ENCODE measurements at regions of chr11 and their contacts with region 1.

Region 1: GRCh38 chr11:126310228-126310991 is 6.5 kb downstream of the DCPS start:
- DNase-seq: peak; percentile 78
- H3K4me3 Mint-ChIP-seq: no peak overlapping the region
- H3K27ac Mint-ChIP-seq: no peak overlapping the region
- H3K4me1 Mint-ChIP-seq: peaks cover 5% of the 10 kb centered on the region
- H3K27me3 Mint-ChIP-seq: no peaks in the 10 kb centered on the region
- CTCF ChIP-seq: peak; percentile 82

Region 2: GRCh38 chr11:126021256-126021655 is 289.2 kb before region 1 on chr11:
- CTCF ChIA-PET with region 1: no interaction called
- POLR2A ChIA-PET with region 1: no interaction called
- intact Hi-C with region 1: no loop called
- DNase-seq: no peak
- H3K4me3 Mint-ChIP-seq: no peak overlapping the region
- H3K27ac Mint-ChIP-seq: no peak overlapping the region
- H3K4me1 Mint-ChIP-seq: no peaks in the 10 kb centered on the region
- H3K27me3 Mint-ChIP-seq: no peaks in the 10 kb centered on the region
- CTCF ChIP-seq: no peak

Region 3: DNA sequence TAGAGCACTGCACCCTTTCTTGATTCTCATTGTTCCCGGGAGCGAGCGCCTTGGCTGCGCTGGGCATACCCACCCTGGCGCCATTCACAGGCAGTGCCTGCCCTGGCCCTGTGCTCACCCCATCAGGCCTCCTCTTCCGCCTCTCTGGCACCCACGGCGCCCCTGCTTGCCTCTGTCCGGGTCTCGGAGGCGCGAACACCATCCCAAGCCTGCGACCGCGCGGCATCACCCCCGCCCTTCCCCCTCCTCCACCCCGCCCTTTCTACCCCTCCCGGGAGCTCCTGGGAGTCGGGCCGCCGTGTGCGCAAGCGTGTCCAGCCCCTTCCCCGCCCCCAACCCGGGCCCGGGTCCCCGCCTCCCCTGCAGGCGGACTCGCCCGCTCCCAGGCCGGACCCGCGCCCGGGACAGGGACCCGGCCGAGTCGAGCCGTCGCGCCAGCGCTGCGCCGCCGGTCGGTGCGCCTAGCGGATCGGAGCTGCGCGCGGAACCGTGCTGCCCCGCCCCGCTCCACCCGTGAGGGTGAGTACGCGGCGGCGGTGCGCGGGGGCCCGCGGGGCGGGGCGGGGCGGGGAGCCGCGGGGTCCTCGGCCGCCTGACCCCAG is 45.0 kb after region 1 on chr11 and contains the start of gene ST3GAL4:
- CTCF ChIA-PET with region 1: interaction called, 22 read pairs
- POLR2A ChIA-PET with region 1: no interaction called
- intact Hi-C with region 1: no loop called
- DNase-seq: peak; percentile 74
- H3K4me3 Mint-ChIP-seq: peak within 1 kb of the TSS; percentile 85
- H3K27ac Mint-ChIP-seq: peak within 1 kb of the TSS; percentile 73
- H3K4me1 Mint-ChIP-seq: peaks cover 44% of the 10 kb centered on the region
- H3K27me3 Mint-ChIP-seq: no peaks in the 10 kb centered on the region
- CTCF ChIP-seq: no peak
- total RNA-seq, gene ST3GAL4: 12.3 and 15.3 TPM in 2 replicates

Region 4: GRCh38 chr11:126403658-126404057 is 93.2 kb after region 1 on chr11:
- CTCF ChIA-PET with region 1: interaction called, 12 read pairs
- POLR2A ChIA-PET with region 1: interaction called, 5 read pairs
- intact Hi-C with region 1: no loop called
- DNase-seq: peak; percentile 68
- H3K4me3 Mint-ChIP-seq: peak overlapping the region; percentile 8
- H3K27ac Mint-ChIP-seq: peak overlapping the region; percentile 65
- H3K4me1 Mint-ChIP-seq: peaks cover 33% of the 10 kb centered on the region
- H3K27me3 Mint-ChIP-seq: no peaks in the 10 kb centered on the region
- CTCF ChIP-seq: no peak

Region 5: DNA sequence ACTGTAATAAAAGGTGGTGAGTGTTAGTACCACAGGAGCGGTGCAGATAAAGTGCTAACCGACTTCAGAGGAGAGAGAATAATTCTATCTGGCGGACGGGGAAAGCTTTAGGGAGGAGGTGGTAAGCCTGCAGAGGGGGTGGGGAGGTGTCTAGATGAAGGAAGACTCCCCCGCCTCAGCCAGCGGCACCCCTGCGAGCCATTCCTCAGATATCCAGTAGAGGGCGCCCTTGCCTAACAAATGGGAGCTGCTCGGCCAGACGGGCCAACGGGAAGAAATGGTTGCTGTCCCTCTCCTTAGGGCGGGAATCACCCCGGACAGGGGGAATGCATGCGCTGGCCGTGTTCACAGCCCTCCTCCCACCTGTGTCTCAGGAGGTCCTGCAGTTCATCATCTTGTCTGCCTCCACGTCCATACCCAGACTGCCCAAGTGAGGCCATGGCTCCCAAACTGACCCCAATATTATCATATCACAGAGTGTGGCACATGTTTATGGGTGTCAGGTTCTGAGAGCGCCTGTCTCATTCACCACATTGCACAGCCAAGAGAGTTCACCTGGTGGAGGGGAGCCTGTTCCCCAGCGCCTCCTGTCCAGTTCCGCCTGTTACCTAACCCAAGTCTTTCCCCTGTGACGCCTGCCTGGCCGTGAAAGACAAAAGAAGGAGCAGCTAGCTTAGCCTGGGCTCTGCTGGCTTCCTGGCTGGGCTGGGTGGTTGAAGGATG is 130.5 kb after region 1 on chr11:
- CTCF ChIA-PET with region 1: interaction called, 6 read pairs
- POLR2A ChIA-PET with region 1: no interaction called
- intact Hi-C with region 1: loop called (anchors 1 kb)
- DNase-seq: peak; percentile 80
- H3K4me3 Mint-ChIP-seq: no peak overlapping the region
- H3K27ac Mint-ChIP-seq: no peak overlapping the region
- H3K4me1 Mint-ChIP-seq: peaks cover 5% of the 10 kb centered on the region
- H3K27me3 Mint-ChIP-seq: no peaks in the 10 kb centered on the region
- CTCF ChIP-seq: peak; percentile 95

Region 6: DNA sequence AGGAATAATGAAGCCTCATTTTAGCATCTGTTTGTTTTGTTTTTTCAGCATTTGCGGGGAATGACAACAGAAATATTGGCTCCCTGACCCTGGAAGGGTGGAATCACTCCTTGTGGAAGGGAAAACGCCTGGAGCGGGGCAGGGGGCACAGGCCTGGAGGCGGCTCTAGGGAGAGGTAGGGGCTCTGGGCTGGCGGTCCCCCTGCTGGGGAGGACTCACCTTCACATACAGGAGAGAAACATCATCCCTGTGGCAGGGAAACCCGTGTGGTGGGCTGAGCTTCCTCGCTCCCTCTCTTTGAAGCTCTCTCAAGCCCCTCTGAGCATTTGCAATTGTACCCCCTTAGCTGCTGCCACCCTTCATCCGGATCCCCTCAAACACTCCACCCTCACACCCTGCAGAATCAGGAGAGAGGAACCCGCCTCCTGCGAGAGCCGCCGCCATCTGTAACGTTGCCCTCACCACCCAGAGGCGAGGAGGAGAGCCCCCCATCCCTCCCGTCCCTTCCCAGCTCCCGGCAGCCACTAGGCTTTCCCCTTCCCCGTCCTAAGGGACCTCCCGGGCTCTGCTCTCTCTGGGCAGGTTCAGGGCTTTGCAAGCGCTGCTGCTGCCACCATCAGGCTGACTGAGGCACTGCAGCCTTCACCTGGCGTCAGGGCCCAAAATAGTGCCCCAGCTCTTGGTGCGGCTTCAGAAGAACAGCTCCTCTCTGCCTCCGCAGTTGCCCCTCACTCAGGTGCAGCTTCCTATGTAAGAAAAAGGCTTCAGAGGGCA is 679.7 kb after region 1 on chr11:
- CTCF ChIA-PET with region 1: interaction called, 7 read pairs
- POLR2A ChIA-PET with region 1: no interaction called
- intact Hi-C with region 1: loop called (anchors 2 kb)
- DNase-seq: peak; percentile 49
- H3K4me3 Mint-ChIP-seq: no peak overlapping the region
- H3K27ac Mint-ChIP-seq: no peak overlapping the region
- H3K4me1 Mint-ChIP-seq: no peaks in the 10 kb centered on the region
- H3K27me3 Mint-ChIP-seq: peaks cover 53% of the 10 kb centered on the region
- CTCF ChIP-seq: peak; percentile 88